Body of pancreas (tissue), 4 donors: ENCODE measurements at regions of chr10 and their contacts with region 1.

Region 1: GRCh38 chr10:84375011-84375410 is 46.6 kb downstream of the CCSER2 start:
- DNase-seq: peak; percentile 44 to 67 (median 48)
- ATAC-seq: peak; percentile 21
- H3K4me3 ChIP-seq: no peak overlapping the region
- H3K27ac ChIP-seq: no peak overlapping the region
- H3K4me1 ChIP-seq: no peaks in the 10 kb centered on the region
- H3K27me3 ChIP-seq: no peaks in the 10 kb centered on the region
- CTCF ChIP-seq: peak; percentile 53 to 82 (median 73)
- POLR2A ChIP-seq: no peak

Region 2: GRCh38 chr10:84205049-84205852 is 169.8 kb before region 1 on chr10:
- intact Hi-C with region 1: no loop called
- DNase-seq: peak in 2 of 4 donors; percentile 25 to 48
- ATAC-seq: no peak
- H3K4me3 ChIP-seq: no peak overlapping the region
- H3K27ac ChIP-seq: no peak overlapping the region
- H3K4me1 ChIP-seq: no peaks in the 10 kb centered on the region
- H3K27me3 ChIP-seq: no peaks in the 10 kb centered on the region
- CTCF ChIP-seq: peak; percentile 15 to 46 (median 38)
- POLR2A ChIP-seq: no peak

Region 3: DNA sequence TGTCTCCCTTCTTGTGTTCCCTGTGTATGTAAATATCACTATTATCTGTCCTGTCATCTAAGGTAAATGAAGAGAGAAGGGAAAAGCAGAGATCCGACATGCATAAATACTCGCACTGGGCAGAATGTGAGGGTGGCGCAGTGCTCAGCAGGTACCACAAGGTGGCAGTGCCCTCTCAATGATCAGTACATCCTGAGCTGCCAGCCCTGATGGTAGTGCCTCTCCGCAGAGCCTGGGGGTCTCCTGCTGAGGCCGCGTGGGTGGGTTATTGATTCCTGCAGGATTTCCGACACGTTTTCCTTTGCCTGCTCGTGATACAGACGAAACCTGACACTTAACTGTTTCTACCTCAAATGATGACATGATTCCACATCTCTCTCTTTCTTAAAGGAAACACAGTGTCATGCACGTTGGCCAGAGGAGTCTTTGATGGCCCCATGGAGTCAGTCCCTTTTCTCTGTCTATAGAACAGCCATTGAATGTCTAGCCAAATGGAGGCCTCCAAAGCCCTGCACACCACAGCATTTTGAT is 110.3 kb before region 1 on chr10:
- intact Hi-C with region 1: loop called (anchors 10 kb)
- DNase-seq: peak; percentile 67 to 79 (median 72)
- ATAC-seq: peak; percentile 85
- H3K4me3 ChIP-seq: no peak overlapping the region
- H3K27ac ChIP-seq: no peak overlapping the region
- H3K4me1 ChIP-seq: no peaks in the 10 kb centered on the region
- H3K27me3 ChIP-seq: no peaks in the 10 kb centered on the region
- CTCF ChIP-seq: peak; percentile 78 to 93 (median 87)
- POLR2A ChIP-seq: no peak

Region 4: GRCh38 chr10:84537447-84537931 is 162.5 kb after region 1 on chr10:
- intact Hi-C with region 1: loop called (anchors 5 kb)
- DNase-seq: peak; percentile 59 to 69 (median 66)
- ATAC-seq: peak; percentile 81
- H3K4me3 ChIP-seq: no peak overlapping the region
- H3K27ac ChIP-seq: no peak overlapping the region
- H3K4me1 ChIP-seq: peaks cover 10% of the 10 kb centered on the region
- H3K27me3 ChIP-seq: no peaks in the 10 kb centered on the region
- CTCF ChIP-seq: peak; percentile 77 to 91 (median 89)
- POLR2A ChIP-seq: no peak